Heart left ventricle (tissue), 16 donors: ENCODE measurements at regions of chr6 and their contacts with region 1.

Region 1: GRCh38 chr6:32393665-32394420 is 13.1 kb downstream of the BTNL2 start:
- DNase-seq: peak in 3 of 5 donors; percentile 30 to 58 (median 31)
- ATAC-seq: peak; percentile 81 to 99 (median 89)
- H3K4me3 ChIP-seq: no peak overlapping the region
- H3K27ac ChIP-seq: peak overlapping the region in 11 of 12 donors; percentile 4 to 83 (median 53)
- H3K4me1 ChIP-seq: peaks cover 0 to 15% (median 0%) of the 10 kb centered on the region in 12 donors
- H3K27me3 ChIP-seq: peaks cover 0 to 14% (median 0%) of the 10 kb centered on the region in 9 donors
- CTCF ChIP-seq: peak in 2 of 12 donors; percentile 16 to 42
- POLR2A ChIP-seq: peak in 1 of 2 donors; percentile 14

Region 2: DNA sequence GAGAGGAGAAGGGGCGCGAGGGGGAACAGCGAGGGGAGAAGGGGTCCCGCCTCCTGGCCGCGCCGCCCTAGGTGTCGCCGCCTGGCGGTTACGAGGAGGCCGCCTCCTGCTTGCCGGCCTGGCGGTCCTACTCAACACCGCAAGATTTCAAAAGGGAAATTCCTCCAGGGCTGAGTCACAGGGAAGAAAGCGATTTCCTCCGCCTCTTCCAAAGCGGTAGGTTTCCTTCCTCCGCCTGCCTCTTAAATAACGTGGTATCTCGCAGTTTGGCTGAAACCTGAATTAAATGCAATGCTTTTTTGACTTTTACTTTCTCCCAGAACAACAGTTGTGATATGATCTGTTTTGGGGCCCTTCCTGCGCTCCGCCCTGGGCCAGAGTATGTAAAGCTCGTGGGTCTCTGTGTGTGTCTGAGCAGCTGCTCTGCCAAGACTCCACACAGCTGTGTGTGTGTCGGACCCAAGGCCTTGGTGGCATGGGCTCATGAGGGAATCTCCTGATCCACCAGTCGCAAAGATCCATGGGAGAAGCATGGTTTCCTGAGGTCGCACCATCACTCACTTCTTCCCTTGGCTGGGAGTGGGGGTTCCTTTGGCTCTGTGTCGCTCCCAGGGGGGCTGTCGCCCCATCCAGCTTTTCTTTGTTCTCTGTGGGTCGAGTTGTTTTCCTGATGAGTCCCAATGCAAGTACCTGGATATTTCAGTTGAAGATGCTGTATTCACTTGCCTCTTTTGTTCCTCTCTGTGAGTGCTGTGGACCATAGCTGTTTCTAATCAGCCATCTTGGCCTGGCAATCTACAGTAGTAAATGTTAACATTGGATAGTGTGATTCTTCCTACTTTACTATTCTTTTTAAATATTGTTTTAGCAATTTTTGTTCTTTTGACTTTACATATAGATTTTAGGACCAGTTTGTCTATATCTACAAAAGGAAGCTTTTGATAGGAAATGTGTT is 138.4 kb before region 1 on chr6:
- intact Hi-C with region 1: loop called in 3 of 10 experiments (anchors 1 to 5 kb)
- DNase-seq: peak; percentile 66 to 80 (median 74)
- ATAC-seq: peak; percentile 88 to 99 (median 96)
- H3K4me3 ChIP-seq: peak overlapping the region in 10 of 12 donors; percentile 15 to 56 (median 44)
- H3K27ac ChIP-seq: peak overlapping the region; percentile 45 to 95 (median 83)
- H3K4me1 ChIP-seq: peaks cover 0 to 17% (median 0%) of the 10 kb centered on the region in 12 donors
- H3K27me3 ChIP-seq: peaks cover 0 to 7% (median 0%) of the 10 kb centered on the region in 9 donors
- CTCF ChIP-seq: peak; percentile 56 to 87 (median 70)
- POLR2A ChIP-seq: peak in 1 of 2 donors; percentile 9

Region 3: DNA sequence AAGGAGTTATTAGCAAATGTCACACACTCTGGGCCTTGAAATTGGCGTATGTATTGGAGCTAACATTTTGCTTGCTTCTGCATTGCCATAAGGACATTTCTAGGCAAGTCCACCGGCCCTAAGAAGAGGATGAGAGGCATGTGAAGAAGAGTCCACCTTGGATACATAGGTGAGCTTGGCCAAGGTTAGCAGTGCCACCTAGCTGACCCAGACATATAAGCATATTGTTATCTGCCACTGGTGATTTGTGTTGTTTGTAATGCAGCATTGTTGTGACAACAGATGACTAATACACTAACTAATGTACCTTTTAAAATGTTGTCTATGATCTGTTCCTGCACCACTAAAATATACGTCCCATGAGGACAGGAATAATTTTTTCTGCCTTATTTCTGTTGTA is 322.6 kb after region 1 on chr6:
- intact Hi-C with region 1: no loop called
- DNase-seq: no peak
- ATAC-seq: no peak
- H3K4me3 ChIP-seq: no peak overlapping the region
- H3K27ac ChIP-seq: no peak overlapping the region
- H3K4me1 ChIP-seq: no peaks in the 10 kb centered on the region
- H3K27me3 ChIP-seq: peaks cover 0 to 37% (median 0%) of the 10 kb centered on the region in 9 donors
- CTCF ChIP-seq: no peak
- POLR2A ChIP-seq: no peak